CD4-positive, alpha-beta memory T cell (primary cell): ENCODE measurements at regions of chr2 and their contacts with region 1.

Region 1: GRCh38 chr2:44244129-44244871 is 31.0 kb upstream of the SLC3A1 start:
- DNase-seq: peak; percentile 46 to 68 (median 66)
- H3K4me3 ChIP-seq: peak overlapping the region in 1 of 2 donors; percentile 58
- H3K4me3 Mint-ChIP-seq: peak overlapping the region; percentile 83 to 93 (median 86)
- H3K27ac ChIP-seq: no peak overlapping the region
- H3K27ac Mint-ChIP-seq: peak overlapping the region in 5 of 7 donors; percentile 58 to 88 (median 71)
- H3K4me1 ChIP-seq: peaks cover 10% of the 10 kb centered on the region
- H3K4me1 Mint-ChIP-seq: peaks cover 13 to 30% (median 23%) of the 10 kb centered on the region in 4 donors
- H3K27me3 ChIP-seq: no peaks in the 10 kb centered on the region
- H3K27me3 Mint-ChIP-seq: no peaks in the 10 kb centered on the region

Region 2: DNA sequence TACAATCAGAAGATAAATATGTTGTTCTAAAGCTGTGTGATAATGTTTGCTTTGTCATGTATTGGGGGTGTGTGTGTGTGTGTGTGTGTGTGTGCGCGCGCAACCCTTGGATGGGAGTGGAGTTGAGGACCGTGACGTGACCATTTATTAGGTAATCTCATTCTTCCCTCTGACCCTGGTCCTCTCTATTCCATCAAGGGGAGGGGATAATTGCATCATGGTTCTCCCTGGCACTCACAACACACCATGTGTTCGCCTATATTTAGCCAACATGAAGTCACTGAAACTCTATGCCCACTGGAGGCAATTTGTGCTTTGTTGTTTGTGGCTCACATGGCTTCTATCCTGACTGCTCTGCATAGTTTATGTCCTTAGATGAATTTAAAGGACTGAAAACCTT is 168.8 kb before region 1 on chr2:
- CTCF ChIA-PET with region 1: no interaction called
- POLR2A ChIA-PET with region 1: no interaction called
- intact Hi-C with region 1: no loop called
- DNase-seq: no peak
- H3K4me3 ChIP-seq: no peak overlapping the region
- H3K4me3 Mint-ChIP-seq: no peak overlapping the region
- H3K27ac ChIP-seq: no peak overlapping the region
- H3K27ac Mint-ChIP-seq: no peak overlapping the region
- H3K4me1 ChIP-seq: no peaks in the 10 kb centered on the region
- H3K4me1 Mint-ChIP-seq: no peaks in the 10 kb centered on the region
- H3K27me3 ChIP-seq: no peaks in the 10 kb centered on the region
- H3K27me3 Mint-ChIP-seq: peaks cover 2 to 8% of the 10 kb centered on the region in 2 donors

Region 3: GRCh38 chr2:44167940-44168680 is 76.2 kb before region 1 on chr2:
- CTCF ChIA-PET with region 1: no interaction called
- POLR2A ChIA-PET with region 1: interaction called, 27 read pairs
- intact Hi-C with region 1: loop called (anchors 2 kb)
- DNase-seq: peak; percentile 96 to 100 (median 99)
- H3K4me3 ChIP-seq: peak overlapping the region; percentile 81 to 99
- H3K4me3 Mint-ChIP-seq: peak overlapping the region; percentile 96 to 100 (median 100)
- H3K27ac ChIP-seq: peak overlapping the region; percentile 98
- H3K27ac Mint-ChIP-seq: peak overlapping the region; percentile 97 to 100 (median 100)
- H3K4me1 ChIP-seq: peaks cover 37% of the 10 kb centered on the region
- H3K4me1 Mint-ChIP-seq: peaks cover 19 to 44% (median 35%) of the 10 kb centered on the region in 4 donors
- H3K27me3 ChIP-seq: no peaks in the 10 kb centered on the region
- H3K27me3 Mint-ChIP-seq: no peaks in the 10 kb centered on the region

Region 4: DNA sequence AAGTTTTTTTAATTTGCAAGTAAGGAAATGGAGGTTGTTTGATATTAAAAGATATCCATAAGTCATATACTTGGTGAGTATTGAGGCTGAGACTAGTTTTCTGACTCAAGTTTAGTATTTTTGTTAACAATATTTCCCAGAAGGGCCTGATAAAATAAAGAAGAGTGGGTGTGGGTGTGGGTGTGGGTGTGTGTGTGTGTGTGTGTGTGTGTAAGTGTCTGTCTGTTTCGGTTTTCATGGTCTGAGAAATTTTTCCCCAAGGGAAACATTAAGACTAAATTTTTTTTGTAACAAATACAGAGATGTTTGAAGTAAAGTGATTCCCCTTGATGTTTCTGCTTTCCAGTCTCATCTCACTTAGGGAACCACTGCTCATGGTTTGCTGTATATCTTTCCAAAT is 39.1 kb before region 1 on chr2:
- CTCF ChIA-PET with region 1: no interaction called
- POLR2A ChIA-PET with region 1: no interaction called
- intact Hi-C with region 1: no loop called
- DNase-seq: no peak
- H3K4me3 ChIP-seq: no peak overlapping the region
- H3K4me3 Mint-ChIP-seq: peak overlapping the region in 5 of 8 donors; percentile 12 to 57 (median 43)
- H3K27ac ChIP-seq: no peak overlapping the region
- H3K27ac Mint-ChIP-seq: peak overlapping the region in 4 of 7 donors; percentile 26 to 84 (median 56)
- H3K4me1 ChIP-seq: peaks cover 45% of the 10 kb centered on the region
- H3K4me1 Mint-ChIP-seq: peaks cover 27 to 54% (median 44%) of the 10 kb centered on the region in 4 donors
- H3K27me3 ChIP-seq: no peaks in the 10 kb centered on the region
- H3K27me3 Mint-ChIP-seq: no peaks in the 10 kb centered on the region

Region 5: DNA sequence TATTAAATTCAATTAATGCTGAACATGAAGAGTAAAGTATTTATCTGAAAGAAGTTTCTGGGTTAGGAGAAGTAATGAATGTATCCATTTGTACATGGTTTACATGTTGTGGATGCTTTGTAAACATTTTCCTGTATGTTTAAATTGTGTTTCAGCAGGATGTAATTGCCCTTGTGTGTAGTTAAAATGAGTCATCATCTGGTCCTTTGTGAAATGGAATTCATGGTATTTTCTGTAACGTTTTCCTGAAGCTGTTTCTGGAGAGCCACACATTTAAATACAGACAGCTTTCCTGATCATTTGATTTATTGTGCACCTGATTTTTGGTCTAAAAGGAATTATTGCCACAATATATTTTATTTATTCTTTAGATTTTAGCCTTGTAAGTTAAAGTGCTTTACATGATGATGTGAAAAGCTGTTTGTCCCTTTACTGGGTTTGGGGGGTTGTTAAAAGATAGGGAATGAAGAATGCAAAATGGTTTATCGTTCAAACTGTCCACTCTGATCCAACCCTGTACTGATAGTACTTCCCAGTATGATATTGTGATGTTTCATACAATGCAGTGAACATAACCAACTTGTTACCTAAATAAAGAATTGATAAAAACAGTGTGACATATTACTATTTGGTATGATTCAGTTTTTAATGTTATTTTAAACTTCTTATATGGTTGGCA is 10.7 kb before region 1 on chr2:
- CTCF ChIA-PET with region 1: interaction called, 5 read pairs
- POLR2A ChIA-PET with region 1: interaction called, 4 read pairs
- intact Hi-C with region 1: loop called (anchors 1 kb)
- DNase-seq: no peak
- H3K4me3 ChIP-seq: no peak overlapping the region
- H3K4me3 Mint-ChIP-seq: no peak overlapping the region
- H3K27ac ChIP-seq: no peak overlapping the region
- H3K27ac Mint-ChIP-seq: peak overlapping the region in 3 of 7 donors; percentile 7 to 64 (median 10)
- H3K4me1 ChIP-seq: peaks cover 19% of the 10 kb centered on the region
- H3K4me1 Mint-ChIP-seq: peaks cover 19 to 30% (median 22%) of the 10 kb centered on the region in 4 donors
- H3K27me3 ChIP-seq: no peaks in the 10 kb centered on the region
- H3K27me3 Mint-ChIP-seq: no peaks in the 10 kb centered on the region

Region 6: DNA sequence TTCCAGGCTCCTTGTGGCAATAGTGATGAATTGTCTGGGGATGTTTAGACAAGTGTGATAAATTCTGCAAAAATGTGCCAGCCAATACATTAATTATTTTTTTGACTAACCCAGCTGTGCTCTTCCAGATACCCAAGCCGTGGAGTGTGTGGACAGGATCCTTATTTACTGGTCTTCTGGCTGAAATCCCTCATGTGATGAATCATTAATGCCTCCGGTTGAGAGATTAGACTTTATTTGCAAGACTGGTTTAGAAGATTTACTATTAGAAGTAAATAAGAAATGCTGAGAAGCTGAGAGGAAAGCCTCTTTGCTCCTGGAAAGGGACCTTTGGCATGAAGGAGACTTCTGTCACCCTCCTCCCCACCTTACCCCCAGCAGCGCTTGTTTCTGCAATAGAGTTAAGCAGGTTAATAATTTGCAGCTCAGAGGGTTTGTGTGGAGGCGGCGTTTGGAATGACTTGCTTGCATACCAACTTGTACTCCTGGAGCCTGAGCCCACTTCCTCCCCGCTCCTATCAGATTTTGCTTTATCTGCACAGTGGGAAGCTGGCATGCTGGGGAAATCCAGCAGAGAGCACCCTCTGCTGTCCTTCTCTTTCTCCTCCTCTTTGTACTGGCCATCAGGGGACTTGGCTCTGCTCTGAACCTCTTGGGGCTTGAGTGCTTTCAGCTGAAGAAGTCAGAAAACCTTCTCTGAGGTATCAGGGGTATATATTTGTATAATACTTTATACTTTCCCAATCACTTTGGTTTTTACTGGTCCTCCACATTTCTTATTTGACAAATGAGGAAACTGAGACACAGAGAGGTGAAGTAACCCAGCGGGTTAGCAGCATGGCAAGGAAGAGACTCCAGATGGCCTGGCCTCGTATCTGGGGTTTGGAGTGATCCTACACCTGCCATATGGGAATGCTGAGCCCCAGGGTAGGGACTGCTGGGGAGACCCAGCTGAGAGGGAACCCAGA is 47.3 kb after region 1 on chr2:
- CTCF ChIA-PET with region 1: interaction called, 5 read pairs
- POLR2A ChIA-PET with region 1: no interaction called
- intact Hi-C with region 1: loop called (anchors 10 kb)
- DNase-seq: no peak
- H3K4me3 ChIP-seq: no peak overlapping the region
- H3K4me3 Mint-ChIP-seq: no peak overlapping the region
- H3K27ac ChIP-seq: no peak overlapping the region
- H3K27ac Mint-ChIP-seq: no peak overlapping the region
- H3K4me1 ChIP-seq: peaks cover 7% of the 10 kb centered on the region
- H3K4me1 Mint-ChIP-seq: peaks cover 5 to 10% (median 8%) of the 10 kb centered on the region in 4 donors
- H3K27me3 ChIP-seq: no peaks in the 10 kb centered on the region
- H3K27me3 Mint-ChIP-seq: peaks cover 4 to 8% of the 10 kb centered on the region in 2 donors

Region 7: DNA sequence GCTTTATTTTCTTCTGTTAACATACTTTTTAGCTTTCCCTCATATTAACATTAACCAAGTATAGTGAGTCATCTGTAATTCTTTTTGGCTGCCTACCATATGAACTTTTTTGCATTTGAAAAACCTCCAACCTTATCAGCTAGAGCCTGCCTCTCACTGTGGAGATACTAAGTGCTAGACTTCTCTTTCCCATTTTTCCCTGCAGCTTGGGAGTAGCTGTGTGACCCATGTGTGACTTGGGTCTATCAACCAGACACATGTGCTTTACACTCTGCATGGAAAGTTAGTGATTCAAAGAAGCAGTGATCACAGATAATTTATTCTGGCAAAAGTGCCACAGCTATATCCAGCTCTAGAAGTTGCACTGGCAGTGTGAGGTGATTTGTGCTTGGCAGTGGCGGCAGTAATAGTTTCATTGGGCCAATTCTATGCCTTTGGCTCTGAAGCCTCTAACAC is 80.7 kb after region 1 on chr2:
- CTCF ChIA-PET with region 1: no interaction called
- POLR2A ChIA-PET with region 1: no interaction called
- intact Hi-C with region 1: no loop called
- DNase-seq: no peak
- H3K4me3 ChIP-seq: no peak overlapping the region
- H3K4me3 Mint-ChIP-seq: no peak overlapping the region
- H3K27ac ChIP-seq: no peak overlapping the region
- H3K27ac Mint-ChIP-seq: peak overlapping the region in 2 of 7 donors; percentile 62 to 89
- H3K4me1 ChIP-seq: no peaks in the 10 kb centered on the region
- H3K4me1 Mint-ChIP-seq: peaks cover 0 to 2% (median 0%) of the 10 kb centered on the region in 4 donors
- H3K27me3 ChIP-seq: no peaks in the 10 kb centered on the region
- H3K27me3 Mint-ChIP-seq: no peaks in the 10 kb centered on the region

Region 8: DNA sequence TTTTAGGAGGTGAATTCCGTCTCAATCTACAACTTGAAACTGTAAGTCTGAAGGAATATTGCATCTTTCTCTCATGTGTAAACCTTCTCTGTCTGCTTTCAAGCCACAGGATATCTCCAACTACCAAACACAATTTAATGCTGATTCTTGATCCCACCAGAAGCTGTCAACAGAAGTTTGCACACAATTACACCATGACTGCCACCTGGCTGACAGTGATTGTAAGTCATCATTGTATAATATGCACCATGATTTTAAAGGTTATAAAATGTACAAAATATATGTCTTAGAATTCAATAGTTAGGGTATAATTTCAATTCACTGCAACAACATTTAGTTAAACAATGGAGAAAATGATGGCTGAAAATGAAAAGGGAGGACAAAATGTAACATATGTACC is 98.6 kb after region 1 on chr2:
- CTCF ChIA-PET with region 1: interaction called, 6 read pairs
- POLR2A ChIA-PET with region 1: no interaction called
- intact Hi-C with region 1: loop called (anchors 1 kb)
- DNase-seq: peak in 4 of 5 donors; percentile 14 to 29 (median 22)
- H3K4me3 ChIP-seq: no peak overlapping the region
- H3K4me3 Mint-ChIP-seq: no peak overlapping the region
- H3K27ac ChIP-seq: no peak overlapping the region
- H3K27ac Mint-ChIP-seq: no peak overlapping the region
- H3K4me1 ChIP-seq: no peaks in the 10 kb centered on the region
- H3K4me1 Mint-ChIP-seq: peaks cover 0 to 2% (median under 1%) of the 10 kb centered on the region in 4 donors
- H3K27me3 ChIP-seq: no peaks in the 10 kb centered on the region
- H3K27me3 Mint-ChIP-seq: no peaks in the 10 kb centered on the region

Region 9: DNA sequence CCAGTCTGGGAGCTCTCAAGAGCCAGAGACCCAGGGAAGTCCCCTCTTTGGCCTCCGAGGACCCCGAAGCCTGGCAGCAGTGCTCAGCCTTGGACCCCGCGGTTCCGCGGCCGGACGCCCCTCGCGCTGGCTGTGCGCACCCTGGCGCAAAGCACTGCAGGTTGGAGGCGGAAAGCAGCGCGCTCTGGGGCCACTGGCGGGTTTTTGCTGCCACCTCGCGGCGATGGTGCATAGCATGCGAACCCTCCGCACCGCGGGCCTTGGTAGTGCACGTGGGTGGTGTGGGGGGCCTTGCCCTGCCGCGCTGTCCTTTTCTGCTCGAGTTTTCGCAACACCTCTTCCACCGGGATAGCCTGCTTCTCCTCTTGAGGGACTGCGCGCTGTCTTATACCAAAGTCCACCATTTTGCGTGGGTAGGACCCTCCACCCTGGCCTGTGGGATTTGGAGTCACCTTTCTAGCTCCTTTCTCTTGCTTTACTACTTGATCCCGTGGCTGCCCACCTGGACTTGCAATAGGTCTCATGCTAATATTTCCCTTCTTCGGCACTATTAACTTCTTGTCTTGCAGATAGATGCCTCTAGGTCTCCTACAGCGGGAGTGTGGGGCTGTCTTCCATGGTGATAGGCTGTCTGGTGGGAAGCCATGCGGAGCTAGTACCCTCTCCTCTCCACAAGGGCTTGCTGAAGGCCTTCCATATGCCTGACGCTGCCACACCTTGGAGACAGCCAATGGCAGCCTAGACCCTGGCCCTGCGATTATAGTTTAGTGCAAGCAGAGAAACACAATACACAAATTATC is 711.5 kb after region 1 on chr2:
- CTCF ChIA-PET with region 1: no interaction called
- POLR2A ChIA-PET with region 1: no interaction called
- intact Hi-C with region 1: loop called (anchors 5 kb)
- DNase-seq: peak; percentile 51 to 58 (median 57)
- H3K4me3 ChIP-seq: no peak overlapping the region
- H3K4me3 Mint-ChIP-seq: peak overlapping the region in 2 of 8 donors; percentile 6 to 76
- H3K27ac ChIP-seq: no peak overlapping the region
- H3K27ac Mint-ChIP-seq: no peak overlapping the region
- H3K4me1 ChIP-seq: peaks cover 13% of the 10 kb centered on the region
- H3K4me1 Mint-ChIP-seq: peaks cover 11 to 36% (median 24%) of the 10 kb centered on the region in 4 donors
- H3K27me3 ChIP-seq: peaks cover 9% of the 10 kb centered on the region
- H3K27me3 Mint-ChIP-seq: peaks cover 30 to 57% of the 10 kb centered on the region in 2 donors